Naive thymus-derived CD4-positive, alpha-beta T cell (primary cell): ENCODE measurements at regions of chr2 and their contacts with region 1.

Region 1: DNA sequence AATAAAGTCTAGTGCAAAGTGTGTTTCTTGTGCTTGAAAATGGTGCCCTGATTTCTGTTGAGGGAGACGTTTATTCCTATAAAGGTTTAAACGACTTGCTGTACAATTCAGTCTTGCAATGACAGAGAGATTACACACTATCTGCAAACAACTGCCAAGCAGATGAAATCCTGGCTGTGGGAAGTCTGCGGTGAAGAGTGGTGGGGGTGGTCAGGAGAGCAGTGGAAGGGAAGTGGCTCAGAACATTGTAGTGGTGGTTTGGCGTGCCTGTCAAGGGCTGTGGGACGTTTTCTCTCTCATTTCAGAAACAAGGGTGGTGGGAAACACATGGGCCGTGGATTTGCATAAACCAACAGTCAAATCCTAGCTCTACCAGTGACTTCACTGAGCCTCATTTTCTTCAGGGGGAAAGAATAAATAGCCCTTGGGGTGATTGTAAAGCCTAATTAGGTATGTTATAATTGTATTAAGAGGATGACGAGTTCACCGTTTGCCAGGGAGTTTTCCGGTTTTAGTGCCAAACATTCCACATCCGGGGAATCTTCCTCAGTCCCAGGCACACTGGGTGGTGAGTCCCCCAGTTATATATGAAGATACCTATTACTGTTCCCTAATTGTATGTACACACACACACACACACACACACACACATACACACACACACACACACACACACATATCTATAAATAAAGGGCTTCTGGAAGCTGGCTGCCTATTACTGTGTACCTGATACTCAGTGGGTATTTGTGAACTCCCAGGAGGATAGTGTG is 115.0 kb downstream of the SPTBN1 start:
- DNase-seq: peak in 8 of 9 donors; percentile 61 to 84 (median 68)
- ATAC-seq: peak; percentile 24
- H3K4me3 ChIP-seq: peak overlapping the region; percentile 58
- H3K4me3 Mint-ChIP-seq: peak overlapping the region; percentile 72 to 94 (median 88)
- H3K27ac ChIP-seq: peak overlapping the region; percentile 95
- H3K27ac Mint-ChIP-seq: peak overlapping the region; percentile 90 to 99 (median 97)
- H3K4me1 ChIP-seq: peaks cover 76 to 91% of the 10 kb centered on the region in 2 donors
- H3K4me1 Mint-ChIP-seq: peaks cover 68 to 100% (median 93%) of the 10 kb centered on the region in 7 donors
- H3K27me3 ChIP-seq: no peaks in the 10 kb centered on the region
- H3K27me3 Mint-ChIP-seq: no peaks in the 10 kb centered on the region

Region 2: DNA sequence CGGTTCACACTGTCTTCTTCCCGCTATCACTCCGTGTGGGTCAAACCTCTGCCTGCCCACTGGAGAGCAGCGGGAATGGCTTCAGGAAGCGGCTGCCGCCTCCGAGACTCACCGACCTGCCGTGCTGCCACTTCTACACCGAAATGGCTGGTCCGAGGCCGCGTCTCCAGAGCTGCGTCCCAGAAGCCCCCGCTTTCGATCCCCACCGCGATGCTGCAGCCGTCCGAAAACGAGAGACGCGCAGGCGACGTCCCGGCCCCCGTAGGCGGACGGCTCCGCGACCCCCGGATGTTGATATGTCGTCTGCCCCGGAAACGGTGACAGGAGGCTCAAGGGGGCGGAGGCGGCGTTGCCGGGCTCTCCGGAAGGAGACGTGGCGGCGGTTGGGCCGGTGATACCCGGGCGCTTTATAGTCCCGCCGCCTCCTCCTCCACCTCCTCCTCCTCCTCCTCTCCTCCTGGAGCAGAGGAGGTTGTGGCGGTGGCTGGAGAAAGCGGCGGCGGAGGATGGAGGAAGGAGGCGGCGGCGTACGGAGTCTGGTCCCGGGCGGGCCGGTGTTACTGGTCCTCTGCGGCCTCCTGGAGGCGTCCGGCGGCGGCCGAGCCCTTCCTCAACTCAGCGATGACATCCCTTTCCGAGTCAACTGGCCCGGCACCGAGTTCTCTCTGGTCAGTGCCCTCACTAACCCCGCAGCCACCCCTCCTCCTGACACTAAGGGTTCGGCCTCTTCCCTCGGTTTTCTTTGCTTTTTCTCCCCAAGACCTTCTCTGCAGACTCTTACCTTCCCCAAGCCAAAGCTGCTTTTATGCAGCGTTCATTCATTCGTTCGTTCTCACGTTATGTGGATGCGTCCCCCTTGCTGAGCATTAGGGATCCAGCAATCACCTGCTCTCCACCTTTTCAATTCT is 784.2 kb before region 1 on chr2 and contains the starts of genes ASB3 and ERLEC1:
- CTCF ChIA-PET with region 1: no interaction called
- POLR2A ChIA-PET with region 1: no interaction called
- intact Hi-C with region 1: loop called in 1 of 2 experiments (anchors 5 kb)
- DNase-seq: peak; percentile 69 to 87 (median 83)
- ATAC-seq: peak; percentile 95
- H3K4me3 ChIP-seq: peak within 1 kb of the TSS; percentile 66
- H3K4me3 Mint-ChIP-seq: peak within 1 kb of the TSS; percentile 88 to 99 (median 98)
- H3K27ac ChIP-seq: peak within 1 kb of the TSS; percentile 82
- H3K27ac Mint-ChIP-seq: peak within 1 kb of the TSS; percentile 81 to 99 (median 96)
- H3K4me1 ChIP-seq: peaks cover 14 to 16% of the 10 kb centered on the region in 2 donors
- H3K4me1 Mint-ChIP-seq: peaks cover 37 to 79% (median 67%) of the 10 kb centered on the region in 7 donors
- H3K27me3 ChIP-seq: no peaks in the 10 kb centered on the region
- H3K27me3 Mint-ChIP-seq: no peaks in the 10 kb centered on the region
- total RNA-seq, gene ASB3: 24.9 to 43.2 (median 34.5) TPM
- total RNA-seq, gene ERLEC1: 13.3 to 30.1 (median 26.3) TPM

Region 3: GRCh38 chr2:54522624-54523281 is 48.4 kb before region 1 on chr2:
- CTCF ChIA-PET with region 1: interaction called, 6 read pairs
- POLR2A ChIA-PET with region 1: no interaction called
- intact Hi-C with region 1: loop called in 1 of 2 experiments (anchors 1 kb)
- DNase-seq: peak; percentile 34 to 83 (median 74)
- ATAC-seq: peak; percentile 97
- H3K4me3 ChIP-seq: no peak overlapping the region
- H3K4me3 Mint-ChIP-seq: peak overlapping the region in 4 of 10 donors; percentile 12 to 45 (median 30)
- H3K27ac ChIP-seq: no peak overlapping the region
- H3K27ac Mint-ChIP-seq: peak overlapping the region in 7 of 9 donors; percentile 29 to 90 (median 62)
- H3K4me1 ChIP-seq: no peaks in the 10 kb centered on the region
- H3K4me1 Mint-ChIP-seq: peaks cover 4 to 23% (median 10%) of the 10 kb centered on the region in 7 donors
- H3K27me3 ChIP-seq: no peaks in the 10 kb centered on the region
- H3K27me3 Mint-ChIP-seq: peaks cover 0 to 27% (median 0%) of the 10 kb centered on the region in 5 donors

Region 4: GRCh38 chr2:54589340-54590215 is 18.5 kb after region 1 on chr2:
- CTCF ChIA-PET with region 1: interaction called, 5 read pairs
- POLR2A ChIA-PET with region 1: interaction called, 223 read pairs
- intact Hi-C with region 1: loop called in 1 of 2 experiments (anchors 1 kb)
- DNase-seq: peak in 6 of 9 donors; percentile 50 to 75 (median 58)
- ATAC-seq: peak; percentile 69
- H3K4me3 ChIP-seq: peak overlapping the region; percentile 34
- H3K4me3 Mint-ChIP-seq: peak overlapping the region; percentile 56 to 93 (median 82)
- H3K27ac ChIP-seq: peak overlapping the region; percentile 70
- H3K27ac Mint-ChIP-seq: peak overlapping the region; percentile 82 to 98 (median 96)
- H3K4me1 ChIP-seq: peaks cover 63 to 89% of the 10 kb centered on the region in 2 donors
- H3K4me1 Mint-ChIP-seq: peaks cover 60 to 100% (median 95%) of the 10 kb centered on the region in 7 donors
- H3K27me3 ChIP-seq: no peaks in the 10 kb centered on the region
- H3K27me3 Mint-ChIP-seq: no peaks in the 10 kb centered on the region

Region 5: GRCh38 chr2:54606393-54606969 is 35.4 kb after region 1 on chr2:
- CTCF ChIA-PET with region 1: interaction called, 6 read pairs
- POLR2A ChIA-PET with region 1: interaction called, 29 read pairs
- intact Hi-C with region 1: loop called in 1 of 2 experiments (anchors 1 kb)
- DNase-seq: peak in 6 of 9 donors; percentile 47 to 72 (median 58)
- ATAC-seq: peak; percentile 86
- H3K4me3 ChIP-seq: peak overlapping the region; percentile 1
- H3K4me3 Mint-ChIP-seq: peak overlapping the region; percentile 61 to 93 (median 74)
- H3K27ac ChIP-seq: peak overlapping the region; percentile 74
- H3K27ac Mint-ChIP-seq: peak overlapping the region; percentile 74 to 98 (median 96)
- H3K4me1 ChIP-seq: peaks cover 18 to 68% of the 10 kb centered on the region in 2 donors
- H3K4me1 Mint-ChIP-seq: peaks cover 79 to 94% (median 91%) of the 10 kb centered on the region in 7 donors
- H3K27me3 ChIP-seq: no peaks in the 10 kb centered on the region
- H3K27me3 Mint-ChIP-seq: no peaks in the 10 kb centered on the region

Region 6: GRCh38 chr2:54634564-54635511 is 63.7 kb after region 1 on chr2:
- CTCF ChIA-PET with region 1: interaction called, 4 read pairs
- POLR2A ChIA-PET with region 1: interaction called, 3 read pairs
- intact Hi-C with region 1: loop called in 1 of 2 experiments (anchors 1 kb)
- DNase-seq: peak in 7 of 9 donors; percentile 20 to 55 (median 43)
- ATAC-seq: peak; percentile 84
- H3K4me3 ChIP-seq: no peak overlapping the region
- H3K4me3 Mint-ChIP-seq: peak overlapping the region; percentile 3 to 63 (median 48)
- H3K27ac ChIP-seq: peak overlapping the region; percentile 45
- H3K27ac Mint-ChIP-seq: peak overlapping the region; percentile 74 to 93 (median 88)
- H3K4me1 ChIP-seq: peaks cover 0 to 16% of the 10 kb centered on the region in 2 donors
- H3K4me1 Mint-ChIP-seq: peaks cover 25 to 76% (median 57%) of the 10 kb centered on the region in 7 donors
- H3K27me3 ChIP-seq: no peaks in the 10 kb centered on the region
- H3K27me3 Mint-ChIP-seq: no peaks in the 10 kb centered on the region

Region 7: DNA sequence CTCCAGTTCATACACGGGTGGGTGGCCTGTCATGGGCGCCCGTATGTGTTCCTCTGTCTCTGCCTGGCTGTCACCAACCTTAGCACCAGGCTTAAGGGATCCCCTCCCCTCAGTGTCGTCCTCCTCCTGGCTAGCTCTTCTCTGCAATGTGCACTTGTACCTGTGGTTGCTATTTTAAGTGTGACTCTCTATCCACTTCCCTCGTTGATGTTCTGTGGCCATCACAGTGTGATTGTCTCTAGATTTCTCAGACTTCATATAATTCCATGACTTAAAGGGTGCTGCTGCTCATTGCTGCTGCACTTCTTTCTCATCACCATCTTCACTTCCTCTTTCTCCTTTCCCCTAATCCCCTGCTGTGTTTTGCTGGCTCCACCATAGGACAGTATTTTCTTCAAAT is 295.8 kb after region 1 on chr2:
- CTCF ChIA-PET with region 1: no interaction called
- POLR2A ChIA-PET with region 1: no interaction called
- intact Hi-C with region 1: no loop called
- DNase-seq: peak in 1 of 9 donors; percentile 5
- ATAC-seq: peak; percentile 36
- H3K4me3 ChIP-seq: no peak overlapping the region
- H3K4me3 Mint-ChIP-seq: peak overlapping the region in 7 of 10 donors; percentile 3 to 32 (median 17)
- H3K27ac ChIP-seq: no peak overlapping the region
- H3K27ac Mint-ChIP-seq: peak overlapping the region in 7 of 9 donors; percentile 1 to 77 (median 16)
- H3K4me1 ChIP-seq: peaks cover 0 to 13% of the 10 kb centered on the region in 2 donors
- H3K4me1 Mint-ChIP-seq: peaks cover 6 to 20% (median 14%) of the 10 kb centered on the region in 7 donors
- H3K27me3 ChIP-seq: no peaks in the 10 kb centered on the region
- H3K27me3 Mint-ChIP-seq: no peaks in the 10 kb centered on the region

Region 8: DNA sequence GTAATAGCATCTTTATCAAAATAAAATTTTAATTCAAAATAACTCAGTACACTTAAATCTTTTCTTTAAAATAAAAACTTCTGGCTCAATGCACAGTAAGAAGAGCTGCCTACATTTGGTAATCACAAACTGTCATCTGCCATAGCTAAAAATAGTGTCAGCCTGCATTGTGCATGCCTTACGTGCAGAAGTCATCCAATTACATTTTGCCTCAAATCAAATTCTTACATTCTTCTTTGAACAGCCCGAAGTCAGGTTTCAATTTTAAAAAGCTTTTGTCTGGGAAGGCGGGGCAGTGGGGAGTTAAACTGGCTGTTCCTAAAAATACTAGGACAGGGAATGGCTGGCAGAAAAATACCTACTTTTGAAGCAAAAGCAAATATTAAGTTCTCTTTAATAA is 428.1 kb after region 1 on chr2:
- CTCF ChIA-PET with region 1: no interaction called
- POLR2A ChIA-PET with region 1: no interaction called
- intact Hi-C with region 1: no loop called
- DNase-seq: no peak
- ATAC-seq: no peak
- H3K4me3 ChIP-seq: no peak overlapping the region
- H3K4me3 Mint-ChIP-seq: peak overlapping the region in 9 of 10 donors; percentile 3 to 80 (median 51)
- H3K27ac ChIP-seq: no peak overlapping the region
- H3K27ac Mint-ChIP-seq: peak overlapping the region in 2 of 9 donors; percentile 10 to 65
- H3K4me1 ChIP-seq: peaks cover 11 to 18% of the 10 kb centered on the region in 2 donors
- H3K4me1 Mint-ChIP-seq: peaks cover 40 to 90% (median 83%) of the 10 kb centered on the region in 7 donors
- H3K27me3 ChIP-seq: no peaks in the 10 kb centered on the region
- H3K27me3 Mint-ChIP-seq: no peaks in the 10 kb centered on the region

Region 9: GRCh38 chr2:55519938-55520885 is 949.1 kb after region 1 on chr2:
- CTCF ChIA-PET with region 1: no interaction called
- POLR2A ChIA-PET with region 1: no interaction called
- intact Hi-C with region 1: loop called in 1 of 2 experiments (anchors 5 kb)
- DNase-seq: peak in 4 of 9 donors; percentile 23 to 58 (median 26)
- ATAC-seq: peak; percentile 31
- H3K4me3 ChIP-seq: peak overlapping the region; percentile 80
- H3K4me3 Mint-ChIP-seq: peak overlapping the region; percentile 89 to 99 (median 98)
- H3K27ac ChIP-seq: peak overlapping the region; percentile 90
- H3K27ac Mint-ChIP-seq: peak overlapping the region; percentile 96 to 100 (median 100)
- H3K4me1 ChIP-seq: peaks cover 0 to 5% of the 10 kb centered on the region in 2 donors
- H3K4me1 Mint-ChIP-seq: peaks cover 5 to 28% (median 16%) of the 10 kb centered on the region in 7 donors
- H3K27me3 ChIP-seq: no peaks in the 10 kb centered on the region
- H3K27me3 Mint-ChIP-seq: no peaks in the 10 kb centered on the region